HAP-1 (cell line): ENCODE measurements at regions of chr15 and their contacts with region 1.

Region 1: DNA sequence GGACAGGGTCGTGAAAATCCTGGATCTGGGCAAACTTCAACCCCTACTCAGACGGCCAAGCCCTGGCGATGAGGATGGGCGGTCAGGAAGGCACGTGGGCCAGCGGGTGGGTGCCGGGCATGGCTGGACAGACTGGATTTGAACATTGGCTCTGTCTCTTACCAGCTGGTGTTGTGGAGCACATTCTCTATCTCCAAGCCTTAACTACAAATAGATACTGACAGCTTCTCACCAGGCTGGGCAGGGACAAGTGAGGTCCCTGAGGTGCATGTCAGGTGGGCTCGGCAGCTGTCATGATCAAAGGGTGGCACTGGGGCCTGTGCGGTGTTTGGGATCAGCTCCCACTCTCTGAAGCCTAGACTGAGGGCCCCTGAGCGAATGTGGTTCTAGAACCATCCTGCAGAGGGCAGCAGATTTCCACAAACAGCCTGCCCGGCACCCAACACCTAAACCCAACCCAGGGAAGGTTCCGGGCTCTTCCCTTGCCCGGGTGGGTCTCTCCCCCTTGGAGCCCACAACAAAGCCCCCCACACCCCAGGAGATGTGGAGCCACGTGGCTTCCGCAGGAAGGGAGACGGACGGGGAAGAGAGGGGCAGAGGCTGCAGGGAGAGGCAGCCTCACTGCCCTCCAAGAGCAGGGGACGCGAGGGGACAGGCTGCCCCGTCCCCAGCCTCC is 58.4 kb downstream of the RGMA start:
- DNase-seq: peak; percentile 45 to 82
- H3K4me3 ChIP-seq: no peak overlapping the region
- H3K4me1 ChIP-seq: 0 out of 2 replicates have a peak, but pooled peaks cover 2% of the 10 kb centered on the region
- H3K27me3 ChIP-seq: no peaks in the 10 kb centered on the region

Region 2: DNA sequence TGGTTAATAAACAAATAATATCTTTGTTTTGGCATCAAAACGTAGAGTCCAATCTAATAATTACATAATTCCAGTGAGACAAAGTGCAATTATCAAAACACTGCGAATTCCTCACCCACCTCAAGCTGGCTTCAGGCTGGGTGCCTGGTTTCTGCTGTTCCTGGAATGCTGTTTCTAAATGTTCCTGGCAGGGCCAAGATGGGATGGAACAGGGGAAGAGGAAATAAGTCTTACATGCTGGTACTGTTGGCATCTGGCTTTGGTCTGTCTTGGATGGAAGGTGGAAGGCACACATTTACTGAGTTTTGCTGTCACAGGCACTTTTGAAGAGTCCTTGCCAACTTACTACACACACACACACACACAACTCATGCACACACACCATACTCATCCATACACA is 1279.0 kb before region 1 on chr15:
- in situ Hi-C with region 1: no loop called
- DNase-seq: no peak
- H3K4me3 ChIP-seq: no peak overlapping the region
- H3K4me1 ChIP-seq: no peaks in the 10 kb centered on the region
- H3K27me3 ChIP-seq: no peaks in the 10 kb centered on the region

Region 3: DNA sequence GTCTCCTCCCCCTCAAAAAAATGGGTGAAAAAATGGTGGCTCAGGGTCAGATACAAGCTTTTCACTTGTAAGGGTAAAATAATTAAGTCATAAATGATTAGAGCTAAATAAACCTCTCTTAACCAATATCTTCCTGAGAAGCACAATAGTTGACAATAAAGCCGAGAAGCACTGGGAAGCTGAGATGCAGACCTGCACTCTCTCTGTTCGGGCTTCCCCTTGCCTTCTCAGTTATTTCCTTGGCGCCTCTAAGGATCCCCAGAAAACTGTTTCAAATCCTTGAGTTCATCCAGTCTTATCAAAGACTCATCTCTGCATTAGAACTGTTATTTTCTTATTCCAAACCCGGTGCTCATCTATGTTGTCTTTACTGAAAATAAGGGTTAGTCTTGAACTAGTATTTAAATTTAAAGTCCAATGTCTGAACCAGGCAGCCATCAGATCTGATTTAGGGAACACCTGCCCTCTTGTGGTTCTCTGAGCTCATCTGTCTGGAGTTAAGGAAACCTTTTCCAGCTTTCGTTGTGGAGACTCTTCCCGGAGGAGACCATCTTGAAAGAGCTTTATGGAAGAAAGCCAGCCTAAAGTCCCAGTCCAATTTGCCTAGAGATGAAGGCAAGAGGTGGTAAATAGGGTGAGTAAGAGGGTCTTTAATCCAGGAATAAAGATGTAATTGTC is 944.4 kb after region 1 on chr15:
- in situ Hi-C with region 1: loop called (anchors 25 kb)
- DNase-seq: no peak
- H3K4me3 ChIP-seq: no peak overlapping the region
- H3K4me1 ChIP-seq: no peaks in the 10 kb centered on the region
- H3K27me3 ChIP-seq: no peaks in the 10 kb centered on the region

Region 4: DNA sequence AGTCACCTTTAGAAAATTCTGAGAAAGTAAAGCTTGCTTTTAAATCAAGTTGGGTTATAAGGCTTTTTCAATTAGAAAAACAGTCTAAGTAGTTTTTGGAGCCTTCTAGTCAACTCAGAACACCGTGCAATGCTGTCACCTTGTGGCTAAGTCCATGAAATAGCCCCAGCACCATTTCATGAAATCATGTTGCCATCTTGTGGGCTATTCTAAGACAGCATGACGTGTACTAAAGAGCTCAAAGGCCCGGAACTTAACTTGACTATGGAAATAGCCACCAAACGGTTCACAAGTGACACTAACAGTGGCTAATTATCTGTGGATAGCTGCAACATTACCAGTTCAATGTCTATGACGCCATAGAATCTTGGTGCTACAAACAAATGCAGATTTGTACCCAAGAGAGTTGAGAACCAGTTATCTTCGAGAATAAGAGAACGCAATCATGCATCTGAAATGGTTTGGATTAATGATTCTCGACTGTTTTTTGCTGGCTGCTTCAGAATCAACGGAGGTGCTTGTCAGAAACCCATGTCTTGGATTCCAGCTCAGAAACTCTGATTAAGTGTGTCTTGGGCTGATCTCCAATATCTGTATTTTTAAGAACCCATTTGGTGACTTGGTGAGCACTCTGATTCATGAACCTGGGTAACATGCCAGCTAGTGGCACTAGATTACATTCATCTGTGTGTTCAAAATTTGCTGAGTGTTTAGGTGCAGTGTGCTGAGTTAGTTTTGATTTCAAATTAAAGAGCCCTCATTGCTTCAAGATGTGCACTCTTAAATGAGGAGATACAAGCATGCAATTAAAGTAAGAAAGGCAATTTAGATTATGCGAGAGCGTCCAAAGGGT is 1089.6 kb after region 1 on chr15:
- in situ Hi-C with region 1: loop called (anchors 10 kb)
- DNase-seq: peak; percentile 63 to 66
- H3K4me3 ChIP-seq: no peak overlapping the region
- H3K4me1 ChIP-seq: no peaks in the 10 kb centered on the region
- H3K27me3 ChIP-seq: no peaks in the 10 kb centered on the region